ENCODE measurements at regions of chr17 and their contacts with region 1.

Region 1: GRCh38 chr17:43766413-43767052 is 7.9 kb upstream of the SOST start:
- DNase-seq: peak; percentile 58
- ATAC-seq: no peak
- H3K4me3 Mint-ChIP-seq: no peak overlapping the region
- H3K27ac Mint-ChIP-seq: no peak overlapping the region
- H3K4me1 Mint-ChIP-seq: no peaks in the 10 kb centered on the region
- H3K27me3 Mint-ChIP-seq: peaks cover 7% of the 10 kb centered on the region

Region 2: DNA sequence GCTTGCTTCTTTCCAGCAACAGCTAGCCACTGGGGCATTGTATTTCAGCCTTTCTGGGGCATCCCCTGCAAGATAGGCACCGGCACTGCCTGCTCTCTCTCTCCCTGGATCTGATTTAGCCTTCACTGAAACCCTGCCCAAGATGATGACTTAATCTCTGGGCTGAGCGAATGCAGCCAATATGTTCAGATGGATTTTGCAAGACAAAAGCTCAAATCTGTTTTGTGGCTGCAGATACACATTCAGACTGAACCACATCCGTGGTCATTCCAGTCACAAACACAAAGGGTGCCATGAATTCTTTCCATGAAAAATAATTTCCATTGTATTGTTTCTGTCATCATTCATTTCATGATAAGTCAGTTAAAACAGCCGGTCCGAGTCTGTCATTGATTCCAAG is 32.2 kb before region 1 on chr17:
- CTCF ChIA-PET with region 1: interaction called, 11 read pairs
- POLR2A ChIA-PET with region 1: no interaction called
- DNase-seq: no peak
- ATAC-seq: no peak
- H3K4me3 Mint-ChIP-seq: no peak overlapping the region
- H3K27ac Mint-ChIP-seq: no peak overlapping the region
- H3K4me1 Mint-ChIP-seq: no peaks in the 10 kb centered on the region
- H3K27me3 Mint-ChIP-seq: peaks cover 21% of the 10 kb centered on the region

Region 3: GRCh38 chr17:43753493-43754129 is 12.9 kb before region 1 on chr17:
- CTCF ChIA-PET with region 1: interaction called, 16 read pairs
- POLR2A ChIA-PET with region 1: no interaction called
- DNase-seq: peak; percentile 45
- ATAC-seq: no peak
- H3K4me3 Mint-ChIP-seq: no peak overlapping the region
- H3K27ac Mint-ChIP-seq: no peak overlapping the region
- H3K4me1 Mint-ChIP-seq: peaks cover 29% of the 10 kb centered on the region
- H3K27me3 Mint-ChIP-seq: peaks cover 40% of the 10 kb centered on the region

Region 4: GRCh38 chr17:43846221-43846712 is 79.7 kb after region 1 on chr17:
- CTCF ChIA-PET with region 1: interaction called, 12 read pairs
- POLR2A ChIA-PET with region 1: no interaction called
- DNase-seq: peak; percentile 80
- ATAC-seq: peak; percentile 97
- H3K4me3 Mint-ChIP-seq: no peak overlapping the region
- H3K27ac Mint-ChIP-seq: no peak overlapping the region
- H3K4me1 Mint-ChIP-seq: no peaks in the 10 kb centered on the region
- H3K27me3 Mint-ChIP-seq: peaks cover 8% of the 10 kb centered on the region

Region 5: GRCh38 chr17:44102845-44103622 is 336.5 kb after region 1 on chr17:
- CTCF ChIA-PET with region 1: no interaction called
- POLR2A ChIA-PET with region 1: no interaction called
- DNase-seq: no peak
- ATAC-seq: no peak
- H3K4me3 Mint-ChIP-seq: no peak overlapping the region
- H3K27ac Mint-ChIP-seq: no peak overlapping the region
- H3K4me1 Mint-ChIP-seq: peaks cover 2% of the 10 kb centered on the region
- H3K27me3 Mint-ChIP-seq: no peaks in the 10 kb centered on the region